ENCODE measurements at regions of chr15 and their contacts with region 1.

Region 1: DNA sequence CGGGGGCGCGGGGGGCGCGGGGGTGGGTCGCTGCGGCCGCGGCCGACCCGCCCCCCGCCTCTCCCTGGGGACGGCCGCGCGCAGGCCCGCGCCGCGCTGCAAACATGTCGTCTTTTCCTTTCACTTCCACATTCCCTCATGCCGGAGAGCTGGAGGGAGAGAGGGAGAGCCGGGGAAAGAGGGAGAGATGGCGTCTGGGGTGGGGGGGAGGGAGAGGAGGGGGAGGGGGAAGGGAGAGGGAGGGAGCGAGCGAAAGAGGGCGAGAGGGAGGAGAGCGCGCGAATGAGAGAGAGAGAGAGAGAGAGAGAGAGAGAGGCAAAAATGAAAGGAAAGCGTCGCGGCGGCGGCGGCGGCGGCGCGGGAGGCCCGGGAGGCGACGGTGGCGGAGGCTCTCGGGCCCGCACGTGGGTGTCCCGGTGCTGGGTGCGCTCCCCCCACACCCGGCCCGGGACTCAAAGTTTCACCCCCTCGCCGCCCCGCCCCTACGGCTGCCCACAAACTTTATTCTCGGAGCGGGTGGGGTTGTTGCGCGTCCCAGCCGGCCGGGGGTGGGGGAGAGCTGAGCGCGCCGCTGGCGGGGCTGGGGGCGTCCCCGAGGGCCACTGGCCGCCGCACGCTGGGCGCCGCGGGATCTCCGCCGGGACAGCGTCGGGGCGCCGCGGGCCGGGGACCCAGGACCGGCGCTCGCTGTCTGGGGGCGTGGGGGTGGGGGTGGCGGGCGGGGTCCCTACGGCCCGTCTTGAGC is 731 bp downstream of the ZNF710 start:
- DNase-seq: peak; percentile 76 to 81
- ATAC-seq: peak; percentile 41 to 54 (median 48)
- H3K4me3 ChIP-seq: peak overlapping the region; percentile 90
- H3K27ac ChIP-seq: peak overlapping the region; percentile 80
- H3K4me1 ChIP-seq: peaks cover 49% of the 10 kb centered on the region
- H3K27me3 ChIP-seq: no peaks in the 10 kb centered on the region
- CTCF ChIP-seq: no peak

Region 2: GRCh38 chr15:89912674-89913396 is 89.0 kb before region 1 on chr15 and contains the start of gene ARPIN:
- intact Hi-C with region 1: loop called in 1 of 2 experiments (anchors 5 kb)
- DNase-seq: peak; percentile 64 to 74
- ATAC-seq: peak; percentile 79 to 91 (median 84)
- H3K4me3 ChIP-seq: peak within 1 kb of the TSS; percentile 91
- H3K27ac ChIP-seq: peak within 1 kb of the TSS; percentile 63
- H3K4me1 ChIP-seq: peaks cover 6% of the 10 kb centered on the region
- H3K27me3 ChIP-seq: no peaks in the 10 kb centered on the region
- CTCF ChIP-seq: no peak
- total RNA-seq, gene ARPIN: 5.3 to 10.3 (median 9.7) TPM

Region 3: DNA sequence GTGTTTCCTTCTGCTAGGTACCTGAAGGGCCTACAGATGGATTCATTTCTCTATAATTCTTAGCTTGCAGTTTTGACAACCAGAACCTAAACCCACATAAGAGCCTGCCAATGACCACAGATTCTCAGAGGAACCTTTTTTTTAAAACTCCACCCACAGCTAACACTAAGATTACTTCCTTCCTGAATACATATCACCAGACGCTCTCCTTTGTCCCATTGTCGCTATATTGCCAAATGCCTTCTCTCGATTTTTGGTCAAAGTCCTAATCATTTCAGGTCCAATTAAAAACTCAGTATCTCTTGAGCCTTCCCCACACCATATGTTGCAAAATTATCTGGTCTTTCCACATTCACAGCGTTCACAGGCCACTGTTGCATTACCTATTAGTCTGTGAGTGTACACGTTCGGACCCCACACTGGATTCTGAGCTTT is 11.7 kb after region 1 on chr15:
- intact Hi-C with region 1: no loop called
- DNase-seq: no peak
- ATAC-seq: no peak
- H3K4me3 ChIP-seq: no peak overlapping the region
- H3K27ac ChIP-seq: no peak overlapping the region
- H3K4me1 ChIP-seq: no peaks in the 10 kb centered on the region
- H3K27me3 ChIP-seq: no peaks in the 10 kb centered on the region
- CTCF ChIP-seq: no peak

Region 4: GRCh38 chr15:90046911-90047392 is 45.1 kb after region 1 on chr15:
- intact Hi-C with region 1: loop called in 1 of 2 experiments (anchors 5 kb)
- DNase-seq: peak; percentile 39 to 66
- ATAC-seq: peak; percentile 78 to 89 (median 84)
- H3K4me3 ChIP-seq: no peak overlapping the region
- H3K27ac ChIP-seq: peak overlapping the region; percentile 78
- H3K4me1 ChIP-seq: peaks cover 22% of the 10 kb centered on the region
- H3K27me3 ChIP-seq: no peaks in the 10 kb centered on the region
- CTCF ChIP-seq: no peak

Measured in psoas muscle (tissue), 8 donors.